ENCODE measurements at regions of chr19 and their contacts with region 1.

Region 1: GRCh38 chr19:55407800-55408532 is 378 bp upstream of the UBE2S start:
- DNase-seq: peak; percentile 98
- H3K4me3 ChIP-seq: peak overlapping the region; percentile 82 to 85
- H3K27ac ChIP-seq: peak overlapping the region; percentile 98
- H3K4me1 ChIP-seq: peaks cover 8 to 21% of the 10 kb centered on the region in 2 experiments; a peak in 3 of 4 replicates
- H3K27me3 ChIP-seq: no peaks in the 10 kb centered on the region
- CTCF ChIP-seq: no peak
- EP300 ChIP-seq: peak; percentile 18 to 37; a peak in 1 of 4 replicates
- RAD21 ChIP-seq: no peak

Region 2: DNA sequence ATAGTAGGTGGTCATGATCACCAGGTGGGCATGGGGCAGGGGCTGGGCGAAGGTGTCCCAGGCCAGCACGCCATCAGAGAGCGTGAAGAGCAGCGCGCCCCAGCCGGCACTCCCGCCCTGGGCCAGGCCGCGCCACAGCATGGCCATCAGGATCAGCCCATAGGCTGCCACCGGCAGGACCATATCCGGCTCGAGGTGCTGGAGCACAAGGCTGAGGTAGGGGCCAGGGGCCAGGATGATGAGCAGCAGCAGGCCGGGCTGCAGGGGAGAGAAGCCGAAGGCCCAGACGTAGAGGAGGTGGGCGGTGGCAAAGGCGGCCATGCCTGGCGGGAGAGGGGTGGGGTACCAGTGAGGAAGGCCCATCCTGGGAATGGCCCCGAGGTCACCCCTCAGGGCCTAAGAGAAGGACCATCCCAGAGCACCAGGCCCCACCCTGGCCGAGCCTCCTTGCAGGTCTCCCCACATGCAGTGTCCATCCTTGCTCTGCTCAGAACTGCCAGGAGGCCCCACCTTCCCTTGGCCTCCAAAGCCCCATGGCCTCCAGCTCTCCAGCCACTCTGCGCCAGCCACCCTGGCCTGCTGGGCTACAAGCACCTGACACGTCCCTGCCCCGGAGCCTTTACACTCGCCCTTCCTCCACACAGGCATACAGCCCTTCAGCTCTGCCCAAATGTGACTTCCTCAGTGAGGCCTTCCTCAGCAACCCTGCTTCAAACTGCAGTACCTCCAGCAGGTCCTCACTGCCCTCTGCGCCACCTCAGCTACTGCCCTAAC is 180.5 kb before region 1 on chr19:
- CTCF ChIA-PET with region 1: no interaction called
- POLR2A ChIA-PET with region 1: interaction called, 11 read pairs
- DNase-seq: no peak
- H3K4me3 ChIP-seq: no peak overlapping the region
- H3K27ac ChIP-seq: peak overlapping the region in 1 of 2 experiments; percentile 78; a peak in 2 of 4 replicates
- H3K4me1 ChIP-seq: peaks cover 0 to 38% of the 10 kb centered on the region in 2 experiments; a peak in 1 of 4 replicates
- H3K27me3 ChIP-seq: no peaks in the 10 kb centered on the region
- CTCF ChIP-seq: no peak
- EP300 ChIP-seq: no peak
- RAD21 ChIP-seq: no peak

Region 3: DNA sequence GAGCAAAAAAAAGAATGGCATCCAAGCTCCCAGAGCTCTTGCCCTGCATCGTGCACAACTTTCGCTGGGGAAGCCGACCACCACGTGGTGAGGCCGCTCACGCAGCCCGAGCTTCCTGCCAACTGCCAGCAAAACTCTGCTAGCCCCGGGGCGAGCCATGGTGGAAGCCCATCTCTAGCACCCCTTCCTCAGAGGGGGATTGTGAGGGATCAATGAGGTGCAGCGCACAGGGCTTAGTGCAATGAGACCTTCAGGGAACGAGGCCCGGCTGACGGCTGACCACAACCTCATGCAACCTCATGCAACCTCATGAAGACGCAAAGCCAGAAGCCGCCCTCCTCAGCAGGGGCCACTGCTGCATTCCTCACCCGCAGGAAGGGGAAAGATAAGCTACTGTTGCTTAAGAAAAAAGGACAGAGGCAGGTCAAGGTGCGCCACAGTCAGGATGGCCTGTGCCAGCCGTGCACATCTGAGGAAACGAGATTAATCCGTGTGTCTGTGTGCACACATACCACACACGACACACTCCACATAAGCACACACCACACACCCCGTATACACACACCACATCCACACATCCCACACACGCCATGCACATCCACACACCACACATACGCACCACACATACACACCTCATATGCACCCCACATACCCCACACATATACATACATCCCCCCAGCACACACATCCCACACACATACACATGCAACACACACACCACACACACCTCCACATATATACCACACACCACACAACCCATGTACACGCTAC is 137.6 kb before region 1 on chr19:
- CTCF ChIA-PET with region 1: no interaction called
- POLR2A ChIA-PET with region 1: no interaction called
- DNase-seq: no peak
- H3K4me3 ChIP-seq: no peak overlapping the region
- H3K27ac ChIP-seq: no peak overlapping the region
- H3K4me1 ChIP-seq: no peaks in the 10 kb centered on the region
- H3K27me3 ChIP-seq: no peaks in the 10 kb centered on the region
- CTCF ChIP-seq: no peak
- EP300 ChIP-seq: no peak
- RAD21 ChIP-seq: no peak

Region 4: DNA sequence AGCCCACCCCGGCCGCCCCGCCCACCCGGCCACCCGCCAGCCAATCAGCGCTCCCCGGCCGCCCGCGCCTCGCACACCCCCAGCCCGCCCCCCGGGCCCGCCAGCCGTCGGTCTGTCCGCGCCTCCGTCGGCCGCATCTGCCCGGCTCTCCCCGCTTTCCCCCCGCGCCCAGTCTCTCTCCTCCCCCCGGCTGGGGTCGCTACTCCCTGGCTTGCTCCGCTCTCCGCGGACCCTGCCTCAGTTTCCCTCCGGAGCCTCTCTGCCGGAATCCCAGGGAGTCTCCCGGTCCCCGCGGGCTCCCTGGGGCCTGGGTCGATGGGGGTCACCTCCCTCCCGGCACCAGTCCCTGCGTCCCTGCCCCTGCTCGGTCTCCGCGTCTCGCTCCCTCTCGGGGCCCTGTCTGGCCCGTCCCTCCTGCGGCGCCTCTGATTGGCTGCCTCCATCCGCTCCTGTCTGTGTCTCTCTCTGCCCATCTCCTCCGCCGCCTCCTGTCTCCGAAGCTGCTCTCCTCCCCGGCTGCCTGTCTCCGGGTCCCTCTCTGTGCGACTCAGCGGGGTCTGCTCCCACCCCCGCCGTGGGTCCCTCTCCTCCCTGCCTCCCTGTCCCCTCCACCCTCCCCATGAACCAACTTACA is 38.2 kb before region 1 on chr19:
- CTCF ChIA-PET with region 1: no interaction called
- POLR2A ChIA-PET with region 1: interaction called, 14 read pairs
- DNase-seq: peak; percentile 96
- H3K4me3 ChIP-seq: peak overlapping the region; percentile 57 to 79
- H3K27ac ChIP-seq: peak overlapping the region; percentile 11 to 88; a peak in 3 of 4 replicates
- H3K4me1 ChIP-seq: peaks cover 26 to 28% of the 10 kb centered on the region in 2 experiments; a peak in 3 of 4 replicates
- H3K27me3 ChIP-seq: no peaks in the 10 kb centered on the region
- CTCF ChIP-seq: no peak
- EP300 ChIP-seq: no peak
- RAD21 ChIP-seq: no peak

Region 5: GRCh38 chr19:55391702-55392615 is 16.0 kb before region 1 on chr19:
- CTCF ChIA-PET with region 1: interaction called, 4 read pairs
- POLR2A ChIA-PET with region 1: interaction called, 33 read pairs
- DNase-seq: peak; percentile 25
- H3K4me3 ChIP-seq: no peak overlapping the region
- H3K27ac ChIP-seq: no peak overlapping the region
- H3K4me1 ChIP-seq: peaks cover 19 to 40% of the 10 kb centered on the region in 2 experiments; a peak in 3 of 4 replicates
- H3K27me3 ChIP-seq: no peaks in the 10 kb centered on the region
- CTCF ChIP-seq: no peak
- EP300 ChIP-seq: no peak
- RAD21 ChIP-seq: no peak

Region 6: GRCh38 chr19:55435020-55435419 is 27.1 kb after region 1 on chr19:
- CTCF ChIA-PET with region 1: no interaction called
- POLR2A ChIA-PET with region 1: no interaction called
- DNase-seq: no peak
- H3K4me3 ChIP-seq: no peak overlapping the region
- H3K27ac ChIP-seq: no peak overlapping the region
- H3K4me1 ChIP-seq: no peaks in the 10 kb centered on the region; a peak in 1 of 4 replicates
- H3K27me3 ChIP-seq: 0 out of 2 replicates have a peak, but pooled peaks cover 6% of the 10 kb centered on the region
- CTCF ChIP-seq: no peak
- EP300 ChIP-seq: no peak
- RAD21 ChIP-seq: no peak

Region 7: DNA sequence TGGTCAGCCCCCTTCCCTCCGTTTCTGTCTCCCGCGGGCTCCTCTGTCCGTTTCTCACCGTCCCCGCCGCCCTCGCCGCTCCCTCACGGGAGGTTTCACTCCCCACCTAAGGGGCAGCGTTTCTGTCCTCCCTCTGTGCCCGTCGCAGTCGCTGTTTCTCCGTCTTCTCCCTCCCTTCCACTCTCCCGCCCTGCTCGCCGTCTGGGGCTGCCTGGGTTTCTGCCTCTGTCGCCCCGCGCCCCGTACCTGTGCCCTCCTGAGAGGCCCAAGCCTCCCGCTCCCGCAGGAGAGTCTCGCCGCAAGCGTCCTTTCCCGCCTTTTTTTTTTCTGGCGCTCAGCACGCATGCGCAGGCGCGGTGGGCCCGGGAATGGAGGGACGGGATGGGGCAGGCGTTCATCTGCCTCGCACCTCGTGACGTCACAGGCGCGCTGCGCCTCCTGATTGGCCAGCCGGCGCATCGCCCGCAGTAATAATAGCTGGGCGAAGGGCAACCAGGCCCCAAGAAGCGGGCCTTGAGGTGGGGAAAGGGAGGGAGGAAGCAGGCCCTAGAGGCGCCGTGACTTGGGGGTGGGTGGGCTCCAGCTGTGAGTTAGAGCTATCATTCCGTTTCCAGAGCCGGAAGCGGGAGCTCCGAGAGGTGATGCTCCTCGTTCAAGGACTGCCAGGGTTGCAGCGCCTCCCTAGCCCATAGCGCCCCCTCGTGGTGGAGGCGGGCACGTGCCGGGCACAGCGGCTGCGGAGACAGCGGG is 95.7 kb after region 1 on chr19:
- CTCF ChIA-PET with region 1: interaction called, 3 read pairs
- POLR2A ChIA-PET with region 1: interaction called, 10 read pairs
- DNase-seq: peak; percentile 99
- H3K4me3 ChIP-seq: peak overlapping the region; percentile 49 to 62
- H3K27ac ChIP-seq: peak overlapping the region in 1 of 2 experiments; percentile 71; a peak in 1 of 4 replicates
- H3K4me1 ChIP-seq: peaks cover 0 to 6% of the 10 kb centered on the region in 2 experiments; a peak in 1 of 4 replicates
- H3K27me3 ChIP-seq: no peaks in the 10 kb centered on the region
- CTCF ChIP-seq: peak; percentile 96
- EP300 ChIP-seq: no peak
- RAD21 ChIP-seq: peak; percentile 93

Region 8: GRCh38 chr19:55580628-55581144 is 172.7 kb after region 1 on chr19 and contains the start of gene ZNF579:
- CTCF ChIA-PET with region 1: no interaction called
- POLR2A ChIA-PET with region 1: no interaction called
- DNase-seq: peak; percentile 95
- H3K4me3 ChIP-seq: peak within 1 kb of the TSS; percentile 80 to 83
- H3K27ac ChIP-seq: peak within 1 kb of the TSS; percentile 73 to 92
- H3K4me1 ChIP-seq: peaks cover 3 to 14% of the 10 kb centered on the region in 2 experiments; a peak in 1 of 4 replicates
- H3K27me3 ChIP-seq: no peaks in the 10 kb centered on the region
- CTCF ChIP-seq: no peak
- EP300 ChIP-seq: peak in 1 of 2 experiments; percentile 46; a peak in 1 of 4 replicates
- RAD21 ChIP-seq: no peak
- polyA plus RNA-seq, gene ZNF579: 3.5 and 5.9 TPM in 2 replicates

Measured in SK-N-SH (cell line).